Sigmoid colon (tissue), 7 donors: ENCODE measurements at regions of chr11 and their contacts with region 1.

Region 1: DNA sequence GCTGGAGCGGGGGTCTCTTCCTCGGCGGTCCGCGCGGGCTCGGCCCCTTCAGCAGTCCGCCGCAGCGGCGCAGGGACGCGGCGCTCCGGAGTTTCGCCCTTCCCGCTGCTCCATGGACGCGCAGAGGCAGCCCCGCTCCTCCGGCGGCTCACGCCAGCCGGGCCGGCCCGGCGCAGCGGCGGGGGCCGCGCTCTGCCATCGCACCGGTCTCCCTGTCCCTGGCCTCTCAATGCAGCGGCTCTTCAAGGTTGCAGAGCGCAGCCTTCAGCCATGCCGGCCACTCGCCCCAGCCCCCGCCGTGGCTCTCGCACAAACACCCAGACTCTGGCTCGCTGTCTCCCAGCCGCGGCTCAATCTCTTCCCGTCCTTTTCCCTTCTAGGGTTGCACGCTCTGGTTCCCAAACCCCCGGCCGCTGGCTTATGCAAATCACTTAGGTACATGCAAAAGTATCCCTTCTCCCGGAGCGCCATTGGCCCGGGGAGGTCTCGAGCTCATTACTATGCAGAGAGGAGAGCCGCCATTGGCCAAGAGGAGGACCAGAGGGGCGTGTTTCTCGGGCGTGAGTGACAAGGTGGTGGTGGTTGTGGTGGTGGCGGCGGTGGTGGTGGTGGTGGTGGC is at the start of gene LGR4:
- DNase-seq: peak; percentile 97
- H3K4me3 ChIP-seq: peak within 1 kb of the TSS; percentile 71 to 97 (median 88)
- H3K27ac ChIP-seq: peak within 1 kb of the TSS; percentile 80 to 96 (median 94)
- H3K4me1 ChIP-seq: peaks cover 0 to 41% (median 38%) of the 10 kb centered on the region in 4 donors
- H3K27me3 ChIP-seq: no peaks in the 10 kb centered on the region
- CTCF ChIP-seq: no peak
- EP300 ChIP-seq: no peak
- POLR2A ChIP-seq: peak; percentile 67 to 85
- total RNA-seq, gene LGR4: 29.9 to 44.3 (median 38.6) TPM

Region 2: GRCh38 chr11:27362749-27363575 is 109.5 kb before region 1 on chr11 and contains the start of gene CCDC34:
- intact Hi-C with region 1: loop called (anchors 5 kb)
- DNase-seq: peak; percentile 94
- H3K4me3 ChIP-seq: peak within 1 kb of the TSS; percentile 75 to 81 (median 77)
- H3K27ac ChIP-seq: peak within 1 kb of the TSS; percentile 29 to 61 (median 53)
- H3K4me1 ChIP-seq: peaks cover 0 to 16% (median 13%) of the 10 kb centered on the region in 4 donors
- H3K27me3 ChIP-seq: no peaks in the 10 kb centered on the region
- CTCF ChIP-seq: no peak
- EP300 ChIP-seq: no peak
- POLR2A ChIP-seq: no peak
- total RNA-seq, gene CCDC34: 2.0 to 4.3 (median 3.1) TPM

Region 3: GRCh38 chr11:27373856-27374602 is 98.5 kb before region 1 on chr11:
- intact Hi-C with region 1: no loop called
- DNase-seq: no peak
- H3K4me3 ChIP-seq: no peak overlapping the region
- H3K27ac ChIP-seq: no peak overlapping the region
- H3K4me1 ChIP-seq: peaks cover 0 to 16% (median 11%) of the 10 kb centered on the region in 4 donors
- H3K27me3 ChIP-seq: no peaks in the 10 kb centered on the region
- CTCF ChIP-seq: no peak
- EP300 ChIP-seq: no peak
- POLR2A ChIP-seq: no peak

Region 4: GRCh38 chr11:27395556-27396260 is 76.8 kb before region 1 on chr11:
- intact Hi-C with region 1: loop called (anchors 5 kb)
- DNase-seq: no peak
- H3K4me3 ChIP-seq: peak overlapping the region in 1 of 4 donors; percentile 3
- H3K27ac ChIP-seq: peak overlapping the region; percentile 24 to 53 (median 44)
- H3K4me1 ChIP-seq: peaks cover 0 to 56% (median 35%) of the 10 kb centered on the region in 4 donors
- H3K27me3 ChIP-seq: no peaks in the 10 kb centered on the region
- CTCF ChIP-seq: no peak
- EP300 ChIP-seq: no peak
- POLR2A ChIP-seq: no peak

Region 5: DNA sequence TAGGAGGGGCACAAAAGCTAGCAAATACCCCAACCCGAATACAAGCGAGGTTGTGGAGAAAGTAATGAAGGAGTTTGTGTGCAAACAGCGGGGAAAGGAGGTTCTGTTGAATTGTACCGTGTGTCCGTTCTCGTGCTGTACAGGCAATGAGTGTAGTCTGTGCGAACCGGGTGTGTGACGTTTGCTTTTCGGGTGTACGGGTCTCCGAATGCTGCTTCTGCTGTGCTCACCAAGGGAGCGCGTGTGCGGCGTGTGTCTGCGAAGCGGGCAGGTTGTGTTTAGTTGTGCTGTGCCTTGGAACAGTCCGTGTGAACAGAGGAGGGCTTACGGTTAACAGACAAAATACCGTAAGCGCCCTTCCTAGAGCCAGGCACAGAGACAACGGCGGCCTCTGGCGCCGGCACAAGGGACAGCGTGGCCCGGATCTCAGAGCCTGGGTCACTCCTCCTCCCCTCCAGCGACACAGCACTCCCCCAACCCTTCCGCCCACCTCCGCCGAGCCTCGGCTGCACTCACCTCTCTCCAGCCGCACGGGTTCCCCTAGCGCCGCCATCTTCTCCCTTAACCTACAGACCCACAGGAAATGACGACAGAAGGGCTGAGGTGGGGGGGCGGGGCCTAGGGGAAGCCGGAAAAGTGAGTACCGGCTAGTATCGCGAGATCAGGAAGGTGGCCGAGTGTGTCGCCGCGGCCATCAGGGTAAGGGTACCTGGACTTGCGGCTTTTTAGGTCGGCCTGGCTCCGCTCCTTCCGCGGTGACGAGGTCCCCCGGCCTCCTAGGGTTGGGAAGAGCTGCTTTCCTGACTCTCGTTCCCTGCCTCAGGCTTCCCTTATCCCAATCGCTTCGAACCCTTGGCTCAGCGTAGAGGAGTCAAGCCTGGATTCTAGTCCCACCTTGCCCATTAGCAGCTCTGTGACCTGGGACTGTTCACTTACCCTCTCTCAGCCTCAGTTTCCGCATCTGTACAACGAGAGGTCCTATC is 34.0 kb after region 1 on chr11 and contains the start of gene LIN7C:
- intact Hi-C with region 1: loop called (anchors 2 kb)
- DNase-seq: peak; percentile 98
- H3K4me3 ChIP-seq: peak within 1 kb of the TSS; percentile 74 to 88 (median 79)
- H3K27ac ChIP-seq: peak within 1 kb of the TSS; percentile 86 to 94 (median 90)
- H3K4me1 ChIP-seq: peaks cover 0 to 53% (median 32%) of the 10 kb centered on the region in 4 donors
- H3K27me3 ChIP-seq: no peaks in the 10 kb centered on the region
- CTCF ChIP-seq: no peak
- EP300 ChIP-seq: no peak
- POLR2A ChIP-seq: peak; percentile 92 to 94
- total RNA-seq, gene LIN7C: 34.3 to 53.3 (median 48.9) TPM

Region 6: GRCh38 chr11:27812341-27812740 is 339.8 kb after region 1 on chr11:
- intact Hi-C with region 1: no loop called
- DNase-seq: no peak
- H3K4me3 ChIP-seq: no peak overlapping the region
- H3K27ac ChIP-seq: no peak overlapping the region
- H3K4me1 ChIP-seq: no peaks in the 10 kb centered on the region
- H3K27me3 ChIP-seq: no peaks in the 10 kb centered on the region
- CTCF ChIP-seq: no peak
- EP300 ChIP-seq: no peak
- POLR2A ChIP-seq: no peak